Sigmoid colon (tissue), 7 donors: ENCODE measurements at regions of chr19 and their contacts with region 1.

Region 1: GRCh38 chr19:40598121-40598917 is 2.9 kb upstream of the LTBP4 start:
- DNase-seq: peak; percentile 95
- H3K4me3 ChIP-seq: peak overlapping the region in 2 of 4 donors; percentile 14 to 38
- H3K27ac ChIP-seq: peak overlapping the region; percentile 5 to 85 (median 23)
- H3K4me1 ChIP-seq: peaks cover 0 to 65% (median 62%) of the 10 kb centered on the region in 4 donors
- H3K27me3 ChIP-seq: peaks cover 9 to 48% (median 47%) of the 10 kb centered on the region in 3 donors
- CTCF ChIP-seq: peak; percentile 93 to 97 (median 94)
- EP300 ChIP-seq: no peak
- POLR2A ChIP-seq: no peak

Region 2: GRCh38 chr19:40305403-40305802 is 292.9 kb before region 1 on chr19:
- intact Hi-C with region 1: loop called (anchors 10 kb)
- DNase-seq: peak; percentile 89
- H3K4me3 ChIP-seq: no peak overlapping the region
- H3K27ac ChIP-seq: no peak overlapping the region
- H3K4me1 ChIP-seq: peaks cover 0 to 3% (median 0%) of the 10 kb centered on the region in 4 donors
- H3K27me3 ChIP-seq: no peaks in the 10 kb centered on the region
- CTCF ChIP-seq: peak; percentile 40 to 62 (median 58)
- EP300 ChIP-seq: no peak
- POLR2A ChIP-seq: no peak

Region 3: GRCh38 chr19:40549007-40549708 is 49.2 kb before region 1 on chr19:
- intact Hi-C with region 1: loop called (anchors 2 kb)
- DNase-seq: peak; percentile 75
- H3K4me3 ChIP-seq: no peak overlapping the region
- H3K27ac ChIP-seq: no peak overlapping the region
- H3K4me1 ChIP-seq: peaks cover 0 to 10% (median 4%) of the 10 kb centered on the region in 4 donors
- H3K27me3 ChIP-seq: peaks cover 3 to 46% (median 21%) of the 10 kb centered on the region in 3 donors
- CTCF ChIP-seq: peak; percentile 7 to 42 (median 18)
- EP300 ChIP-seq: no peak
- POLR2A ChIP-seq: no peak

Region 4: DNA sequence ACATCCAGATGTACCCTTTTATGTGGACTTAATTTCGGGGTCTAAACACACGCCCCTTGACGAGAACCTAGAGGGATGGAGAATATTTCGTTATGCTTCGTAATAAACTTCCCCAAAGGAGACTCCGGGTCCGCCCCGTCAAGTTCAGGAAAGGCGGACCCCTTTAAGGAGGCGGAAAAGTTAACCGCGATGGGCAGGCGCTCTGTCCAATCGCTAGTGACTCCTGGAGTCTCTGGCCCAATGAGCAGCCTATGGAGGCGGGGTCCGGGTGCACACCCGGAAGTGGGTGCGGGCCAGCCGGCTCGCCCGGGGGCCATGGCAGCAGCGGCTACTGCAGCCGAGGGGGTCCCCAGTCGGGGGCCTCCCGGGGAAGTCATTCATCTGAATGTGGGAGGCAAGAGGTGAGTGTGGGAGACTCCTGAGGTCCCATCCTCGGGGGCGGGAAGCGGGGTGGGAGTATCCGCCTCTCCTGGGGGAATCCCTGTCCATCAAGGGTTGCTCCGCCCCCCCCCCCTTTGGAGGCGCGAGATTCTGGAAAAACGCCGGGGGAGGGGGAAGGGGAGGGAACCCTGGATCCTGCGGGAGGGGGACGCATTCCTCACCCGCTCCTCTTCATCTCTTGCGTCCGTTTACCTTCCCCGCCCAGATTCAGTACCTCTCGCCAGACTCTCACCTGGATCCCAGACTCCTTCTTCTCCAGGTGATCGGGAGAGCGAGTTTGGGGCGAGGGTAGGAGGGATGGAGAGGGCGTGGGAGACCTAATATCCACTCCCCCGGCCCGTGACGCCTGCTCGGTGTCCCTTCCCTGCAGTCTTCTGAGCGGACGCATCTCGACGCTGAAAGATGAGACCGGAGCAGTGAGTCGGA is 21.5 kb before region 1 on chr19 and contains the start of gene SHKBP1:
- intact Hi-C with region 1: loop called (anchors 2 kb)
- DNase-seq: peak; percentile 98
- H3K4me3 ChIP-seq: peak within 1 kb of the TSS; percentile 65 to 92 (median 83)
- H3K27ac ChIP-seq: peak within 1 kb of the TSS; percentile 77 to 87 (median 84)
- H3K4me1 ChIP-seq: peaks cover 0 to 26% (median 14%) of the 10 kb centered on the region in 4 donors
- H3K27me3 ChIP-seq: no peaks in the 10 kb centered on the region
- CTCF ChIP-seq: no peak
- EP300 ChIP-seq: no peak
- POLR2A ChIP-seq: peak; percentile 40 to 51
- total RNA-seq, gene SHKBP1: 15.9 to 36.3 (median 33.8) TPM

Region 5: DNA sequence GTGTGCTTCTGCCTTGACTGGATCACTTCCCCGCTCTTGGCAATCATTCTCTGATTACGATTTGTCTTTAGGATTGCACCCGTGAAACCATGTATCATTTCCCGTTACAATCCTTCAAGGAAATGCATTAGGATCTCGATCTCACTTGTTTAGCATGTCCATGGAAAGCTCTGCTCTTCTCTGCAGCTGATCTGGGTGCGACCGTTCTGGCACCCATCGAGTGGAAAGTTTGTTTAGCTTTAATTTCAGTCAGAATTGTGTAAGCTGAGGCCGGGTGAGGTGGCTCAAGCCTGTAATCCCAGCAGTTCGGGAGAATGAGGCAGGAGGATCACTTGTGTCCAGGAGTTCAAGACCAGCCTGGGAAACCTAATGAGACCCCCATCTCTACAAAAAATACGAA is 61.2 kb after region 1 on chr19:
- intact Hi-C with region 1: no loop called
- DNase-seq: no peak
- H3K4me3 ChIP-seq: no peak overlapping the region
- H3K27ac ChIP-seq: peak overlapping the region in 1 of 4 donors; percentile 38
- H3K4me1 ChIP-seq: peaks cover 0 to 16% (median 12%) of the 10 kb centered on the region in 4 donors
- H3K27me3 ChIP-seq: no peaks in the 10 kb centered on the region
- CTCF ChIP-seq: no peak
- EP300 ChIP-seq: no peak
- POLR2A ChIP-seq: no peak